ENCODE measurements at regions of chr1 and their contacts with region 1.

Region 1: DNA sequence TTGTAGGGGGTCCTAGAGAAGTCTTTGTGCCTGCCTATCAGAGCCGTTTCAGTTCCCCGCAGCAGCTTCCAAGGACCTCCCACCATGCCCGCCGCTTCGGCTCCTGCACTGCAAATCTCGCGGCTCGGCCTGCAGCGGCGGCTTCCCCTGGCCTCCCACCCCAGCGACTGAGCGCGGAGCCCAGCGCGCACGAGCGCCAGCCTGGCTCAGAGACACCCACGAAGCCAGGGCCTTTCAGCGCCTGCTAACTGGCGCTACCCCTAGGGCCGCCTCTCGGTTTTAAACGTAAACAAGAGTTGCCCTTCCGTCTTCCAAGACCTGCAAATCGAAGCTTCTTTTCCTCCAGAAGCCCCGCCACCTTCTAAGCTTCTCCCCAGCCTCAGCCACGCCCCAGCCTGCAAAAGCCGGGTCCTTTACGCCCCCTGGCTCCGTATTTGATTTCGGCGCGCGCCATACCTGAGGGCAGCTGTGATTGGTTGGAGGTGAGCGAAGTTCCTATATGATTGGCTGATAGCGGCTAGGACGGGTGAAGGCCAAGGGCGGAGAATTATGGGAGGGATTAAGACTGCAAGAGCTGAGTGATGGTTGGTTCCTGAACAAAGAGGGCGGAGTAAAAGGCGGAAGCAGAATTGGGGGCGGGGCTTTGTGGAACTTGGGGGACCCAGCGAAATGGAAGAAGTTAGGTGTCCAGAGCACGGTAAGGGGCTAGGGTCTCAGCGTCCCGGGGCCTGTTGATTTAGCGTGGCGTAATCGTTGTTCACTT is at the start of gene TTF2:
- DNase-seq: peak; percentile 98
- H3K4me3 Mint-ChIP-seq: no peak within 1 kb of the TSS
- H3K27ac Mint-ChIP-seq: no peak within 1 kb of the TSS
- H3K4me1 Mint-ChIP-seq: peaks cover 54% of the 10 kb centered on the region
- H3K27me3 Mint-ChIP-seq: no peaks in the 10 kb centered on the region
- total RNA-seq, gene TTF2: 98.4 and 103 TPM in 2 replicates

Region 2: DNA sequence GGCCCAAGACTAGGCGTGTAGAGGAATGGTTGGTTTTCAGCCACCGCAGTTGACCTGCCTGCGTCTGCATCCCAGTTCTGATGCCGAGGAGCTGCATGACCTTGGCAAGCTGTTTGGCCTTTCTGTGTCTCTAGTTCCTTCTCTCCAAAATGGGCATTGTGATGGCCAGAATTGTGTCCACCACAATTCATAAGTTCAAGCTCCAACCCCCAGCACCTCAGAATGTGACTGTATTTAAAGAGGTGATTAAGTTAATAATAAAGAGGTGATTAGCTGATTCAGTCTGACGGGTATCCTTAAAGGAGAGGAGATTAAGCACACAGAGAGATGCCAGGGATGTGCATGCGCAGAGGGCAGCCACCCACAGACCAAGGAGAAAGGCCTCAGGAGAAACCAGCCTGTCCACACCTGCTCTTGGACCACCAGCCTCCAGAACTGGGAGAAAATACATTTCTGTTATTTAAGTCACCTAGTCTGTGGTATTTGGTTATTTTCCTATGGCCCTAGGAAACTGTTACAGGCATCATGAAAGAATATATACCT is 920.2 kb before region 1 on chr1:
- intact Hi-C with region 1: loop called (anchors 5 kb)
- DNase-seq: no peak
- H3K4me3 Mint-ChIP-seq: no peak overlapping the region
- H3K27ac Mint-ChIP-seq: no peak overlapping the region
- H3K4me1 Mint-ChIP-seq: peaks cover 7% of the 10 kb centered on the region
- H3K27me3 Mint-ChIP-seq: peaks cover 14% of the 10 kb centered on the region

Region 3: DNA sequence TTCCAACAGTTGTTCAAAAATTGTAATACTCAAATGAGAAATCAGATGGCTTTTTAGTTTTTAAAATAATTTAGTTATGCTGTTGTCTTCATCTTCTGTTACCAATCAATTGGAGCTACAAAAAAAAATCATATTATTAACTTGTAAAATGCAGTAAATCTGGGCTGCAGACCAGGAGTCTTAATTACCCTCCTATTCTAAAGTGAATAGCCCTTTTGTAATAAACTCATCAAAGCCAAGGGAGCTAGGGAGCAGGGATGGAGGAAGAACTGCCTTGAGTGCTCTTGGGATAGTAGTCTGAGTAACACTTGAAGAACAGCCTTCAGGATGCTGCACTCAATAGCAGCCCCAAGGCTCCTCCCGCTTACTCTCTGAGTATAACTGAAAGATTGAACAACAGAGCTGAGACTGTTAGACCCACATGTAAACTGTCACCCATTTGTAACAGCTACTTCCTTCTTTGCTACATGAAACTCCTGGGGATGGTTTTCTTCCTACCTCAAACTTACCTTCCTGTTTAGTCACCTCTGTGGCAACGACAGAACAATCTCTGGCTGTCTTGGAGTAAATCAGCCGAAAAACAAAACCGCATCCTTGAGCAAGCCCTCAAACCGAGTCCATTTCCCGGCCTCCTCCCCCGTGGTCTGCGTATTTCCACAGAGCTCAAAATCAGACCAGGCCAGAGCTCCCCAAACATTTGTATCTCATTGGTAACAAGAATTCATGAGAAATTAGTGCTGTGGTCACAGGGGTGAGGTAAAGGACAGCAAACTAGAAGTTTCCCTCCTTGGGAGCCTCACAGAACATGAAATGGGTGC is 544.9 kb before region 1 on chr1:
- intact Hi-C with region 1: loop called (anchors 2 kb)
- DNase-seq: peak; percentile 68
- H3K4me3 Mint-ChIP-seq: peak overlapping the region; percentile 50
- H3K27ac Mint-ChIP-seq: peak overlapping the region; percentile 94
- H3K4me1 Mint-ChIP-seq: peaks cover 63% of the 10 kb centered on the region
- H3K27me3 Mint-ChIP-seq: no peaks in the 10 kb centered on the region

Region 4: GRCh38 chr1:116724765-116725375 is 335.0 kb before region 1 on chr1:
- intact Hi-C with region 1: loop called (anchors 1 kb)
- DNase-seq: peak; percentile 65
- H3K4me3 Mint-ChIP-seq: no peak overlapping the region
- H3K27ac Mint-ChIP-seq: no peak overlapping the region
- H3K4me1 Mint-ChIP-seq: peaks cover 33% of the 10 kb centered on the region
- H3K27me3 Mint-ChIP-seq: no peaks in the 10 kb centered on the region

Region 5: GRCh38 chr1:116873680-116874271 is 186.1 kb before region 1 on chr1:
- intact Hi-C with region 1: loop called (anchors 5 kb)
- DNase-seq: no peak
- H3K4me3 Mint-ChIP-seq: peak overlapping the region; percentile 17
- H3K27ac Mint-ChIP-seq: peak overlapping the region; percentile 36
- H3K4me1 Mint-ChIP-seq: peaks cover 25% of the 10 kb centered on the region
- H3K27me3 Mint-ChIP-seq: peaks cover 2% of the 10 kb centered on the region

Region 6: GRCh38 chr1:117121776-117122697 is 62.2 kb after region 1 on chr1:
- intact Hi-C with region 1: loop called (anchors 1 kb)
- DNase-seq: peak; percentile 75
- H3K4me3 Mint-ChIP-seq: peak overlapping the region; percentile 81
- H3K27ac Mint-ChIP-seq: peak overlapping the region; percentile 19
- H3K4me1 Mint-ChIP-seq: peaks cover 5% of the 10 kb centered on the region
- H3K27me3 Mint-ChIP-seq: peaks cover 17% of the 10 kb centered on the region

Region 7: DNA sequence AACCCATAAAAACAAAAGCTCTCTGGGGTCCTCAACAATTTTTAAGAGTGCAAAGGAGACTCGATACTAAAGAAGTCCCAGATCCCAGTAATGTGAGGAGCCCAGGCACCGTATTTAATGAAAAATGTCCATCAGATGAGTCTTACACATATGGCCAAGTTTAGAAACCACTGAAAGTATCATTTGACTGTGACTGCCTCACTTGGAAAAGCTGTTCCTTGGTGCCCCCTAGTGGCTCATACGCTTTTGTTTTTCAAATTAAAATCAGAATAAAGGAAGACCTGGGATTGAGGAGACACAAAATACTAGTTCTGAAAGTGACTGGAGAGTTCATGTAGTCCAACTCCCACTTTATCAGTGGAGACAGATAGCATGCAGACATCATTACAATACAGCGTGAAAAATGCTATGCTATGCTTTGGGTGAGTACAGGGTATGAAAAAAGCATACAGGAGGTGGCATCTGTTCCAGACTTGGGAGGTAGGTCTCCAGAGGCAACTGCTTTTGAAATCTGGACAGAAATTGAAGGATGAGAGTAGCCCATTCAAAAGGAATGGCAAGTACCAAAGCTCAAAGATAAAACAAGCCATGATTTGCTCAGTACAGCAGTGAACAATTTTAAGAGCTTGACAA is 835.7 kb after region 1 on chr1:
- intact Hi-C with region 1: loop called (anchors 10 kb)
- DNase-seq: peak; percentile 27
- H3K4me3 Mint-ChIP-seq: no peak overlapping the region
- H3K27ac Mint-ChIP-seq: no peak overlapping the region
- H3K4me1 Mint-ChIP-seq: no peaks in the 10 kb centered on the region
- H3K27me3 Mint-ChIP-seq: no peaks in the 10 kb centered on the region

Measured in activated T-helper 2 cell treated with anti-CD3 and anti-CD28 coated beads, Interferon-gamma antibody, Interleukin-2, Interleukin-4, amounts not matched to agents 10 μg/mL and 5 μg/mL and 100 μg/mL, durations not matched to agents 14 hours and 24 hours and 36 hours (primary cell).